Mammary epithelial cell (primary cell): ENCODE measurements at regions of chr4 and their contacts with region 1.

Region 1: GRCh38 chr4:7630568-7631287 is 196.0 kb upstream of the PSAPL1 start:
- DNase-seq: peak; percentile 83
- H3K4me3 ChIP-seq: no peak overlapping the region
- H3K27ac ChIP-seq: no peak overlapping the region
- H3K4me1 ChIP-seq: peaks cover 18% of the 10 kb centered on the region
- H3K27me3 ChIP-seq: no peaks in the 10 kb centered on the region
- CTCF ChIP-seq: peak in 1 of 2 donors; percentile 16

Region 2: GRCh38 chr4:7546809-7547367 is 83.8 kb before region 1 on chr4:
- CTCF ChIA-PET with region 1: no interaction called
- dilution Hi-C with region 1: no loop called
- in situ Hi-C with region 1: no loop called
- intact Hi-C with region 1: loop called (anchors 2 kb)
- DNase-seq: peak; percentile 24
- H3K4me3 ChIP-seq: peak overlapping the region in 1 of 3 experiments; percentile 8
- H3K27ac ChIP-seq: peak overlapping the region; percentile 37
- H3K4me1 ChIP-seq: peaks cover 21% of the 10 kb centered on the region
- H3K27me3 ChIP-seq: no peaks in the 10 kb centered on the region
- CTCF ChIP-seq: no peak

Region 3: DNA sequence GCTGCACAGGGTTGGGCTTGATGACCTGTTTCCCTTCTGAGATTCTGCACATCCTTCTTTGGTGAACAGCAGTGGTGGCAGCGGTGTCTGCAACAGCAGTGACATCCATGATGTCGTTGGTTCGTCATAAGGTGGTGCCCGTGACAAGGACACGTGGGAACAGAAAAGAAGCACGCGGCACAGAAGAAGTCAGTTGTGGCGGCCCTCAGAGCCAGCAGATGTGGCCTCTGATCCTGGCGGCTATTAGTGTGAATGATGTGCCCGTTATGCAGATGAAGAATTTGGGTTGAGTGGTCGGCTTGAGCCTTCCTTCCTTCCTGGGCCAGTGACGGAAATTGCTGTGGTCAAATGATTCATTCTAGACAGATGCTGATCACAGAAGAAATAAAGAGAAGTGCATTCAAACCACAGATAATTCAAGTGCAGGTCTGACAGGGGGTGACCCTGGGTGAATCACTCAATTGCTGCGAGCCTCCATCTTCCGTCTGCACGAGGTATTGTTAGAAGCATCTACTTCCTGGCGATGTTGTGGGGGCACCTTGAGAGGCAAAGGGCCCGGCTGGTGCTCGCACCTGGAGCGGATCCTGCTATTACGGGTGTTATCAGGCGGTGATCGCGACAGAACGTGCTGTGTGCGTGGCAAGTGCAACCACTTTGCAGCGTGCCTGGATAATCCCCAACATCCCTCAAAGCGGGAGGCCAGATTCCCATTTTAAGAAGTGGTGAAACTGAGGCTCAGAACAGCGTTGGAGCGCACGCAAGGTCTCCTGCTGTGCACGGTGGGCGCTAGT is 19.2 kb after region 1 on chr4:
- CTCF ChIA-PET with region 1: interaction called, 3 read pairs
- dilution Hi-C with region 1: no loop called
- in situ Hi-C with region 1: no loop called
- intact Hi-C with region 1: loop called (anchors 1 kb)
- DNase-seq: peak; percentile 82
- H3K4me3 ChIP-seq: no peak overlapping the region
- H3K27ac ChIP-seq: peak overlapping the region; percentile 33
- H3K4me1 ChIP-seq: peaks cover 51% of the 10 kb centered on the region
- H3K27me3 ChIP-seq: no peaks in the 10 kb centered on the region
- CTCF ChIP-seq: no peak

Region 4: DNA sequence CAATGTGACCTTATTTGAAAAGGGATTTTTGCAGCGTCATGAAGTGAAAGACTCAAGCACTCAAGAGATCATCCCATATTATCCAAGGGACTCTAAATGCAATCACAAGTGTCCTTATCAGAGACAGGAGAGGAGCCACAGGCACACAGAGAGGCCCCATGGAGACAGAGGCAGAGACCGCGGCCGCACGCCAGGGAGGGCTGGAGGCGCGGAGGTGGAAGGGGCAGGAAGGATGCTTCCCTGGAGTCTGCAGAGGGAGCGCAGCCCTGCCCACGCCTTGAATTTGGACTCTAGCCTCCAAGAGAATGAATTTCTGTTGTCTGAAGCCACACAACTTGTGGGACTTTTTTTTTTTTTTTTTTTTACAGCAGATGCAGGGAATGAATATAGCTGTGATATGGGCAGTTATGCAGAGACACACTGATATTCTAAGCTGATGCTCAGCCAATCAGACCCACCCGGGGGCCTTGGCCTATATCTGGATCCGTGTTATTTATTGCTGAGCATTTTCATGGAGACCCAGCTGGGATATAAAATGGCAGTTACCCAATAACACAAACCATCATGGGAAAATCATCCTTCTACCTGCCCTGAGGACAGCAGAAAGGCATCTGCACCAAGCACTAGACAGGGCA is 48.8 kb after region 1 on chr4:
- CTCF ChIA-PET with region 1: no interaction called
- dilution Hi-C with region 1: no loop called
- in situ Hi-C with region 1: no loop called
- intact Hi-C with region 1: loop called (anchors 1 kb)
- DNase-seq: no peak
- H3K4me3 ChIP-seq: no peak overlapping the region
- H3K27ac ChIP-seq: no peak overlapping the region
- H3K4me1 ChIP-seq: peaks cover 28% of the 10 kb centered on the region
- H3K27me3 ChIP-seq: no peaks in the 10 kb centered on the region
- CTCF ChIP-seq: no peak

Region 5: DNA sequence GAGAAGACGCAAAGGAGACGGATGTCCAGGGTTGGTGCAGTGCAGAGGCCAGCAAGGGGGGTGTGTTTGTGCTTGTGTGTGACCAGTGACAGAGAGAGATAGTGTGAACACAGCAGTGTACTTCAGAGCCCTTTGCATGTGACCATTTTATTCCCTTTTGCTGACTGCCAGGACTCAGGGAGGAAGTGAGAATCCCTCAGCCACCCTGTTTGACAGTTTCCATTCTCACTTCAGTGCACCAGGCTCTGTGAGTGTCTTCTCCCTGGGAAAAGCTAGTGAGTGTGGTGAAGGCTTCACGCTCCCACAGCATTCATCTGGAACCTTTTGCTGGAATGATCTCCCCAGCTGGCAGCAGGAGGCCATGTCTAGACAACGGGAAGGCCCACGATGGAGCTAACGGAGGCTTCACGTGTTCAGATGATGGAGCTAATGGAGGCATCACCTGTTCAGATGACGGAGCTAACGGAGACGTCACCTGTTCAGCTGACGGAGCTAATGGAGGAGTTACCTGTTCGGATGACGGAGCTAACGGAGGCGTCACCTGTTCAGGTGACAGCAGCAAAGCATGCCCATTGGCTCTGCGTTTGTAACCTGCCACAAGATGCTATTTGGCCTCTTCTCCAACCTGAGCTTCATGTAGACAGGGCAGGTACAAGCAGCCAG is 113.5 kb after region 1 on chr4:
- CTCF ChIA-PET with region 1: no interaction called
- dilution Hi-C with region 1: no loop called
- in situ Hi-C with region 1: no loop called
- intact Hi-C with region 1: no loop called
- DNase-seq: no peak
- H3K4me3 ChIP-seq: no peak overlapping the region
- H3K27ac ChIP-seq: no peak overlapping the region
- H3K4me1 ChIP-seq: no peaks in the 10 kb centered on the region
- H3K27me3 ChIP-seq: no peaks in the 10 kb centered on the region
- CTCF ChIP-seq: no peak